Dorsolateral prefrontal cortex (tissue), 120 donors: ENCODE measurements at regions of chr9 and their contacts with region 1.

Region 1: DNA sequence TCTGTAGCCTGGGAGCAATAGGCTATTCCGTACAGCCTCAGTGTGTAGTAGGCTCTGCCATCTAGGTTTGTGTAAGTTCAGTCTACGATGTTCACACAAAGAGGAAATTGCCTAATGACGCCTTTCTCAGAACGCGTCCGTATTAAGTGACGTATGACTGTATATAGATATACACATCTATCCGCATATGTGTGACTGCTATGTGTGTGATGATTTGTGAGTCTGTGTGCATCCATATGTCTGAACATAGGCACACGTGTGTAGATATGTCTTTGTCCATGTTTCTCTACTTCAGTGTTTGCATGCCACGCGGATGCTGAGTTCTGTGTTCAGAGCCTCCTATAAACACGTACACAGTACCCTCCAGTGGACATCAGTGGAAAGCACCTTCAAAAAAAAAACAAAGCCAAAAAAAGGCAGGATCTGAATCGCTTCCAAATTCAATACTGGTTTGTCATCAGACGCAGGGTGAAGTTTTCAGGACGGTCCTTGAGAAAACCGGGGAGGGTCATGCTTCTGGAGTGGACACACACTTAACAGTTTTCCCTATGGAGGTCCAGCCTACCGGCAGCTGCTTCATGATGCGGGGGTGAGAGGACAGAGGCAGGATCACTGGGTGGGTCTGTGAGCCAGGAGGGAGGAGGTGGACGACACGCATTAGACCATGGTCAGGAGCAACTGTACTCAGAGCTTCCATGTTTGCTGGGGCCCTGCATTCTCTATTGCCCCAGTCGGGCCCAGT is 29.5 kb upstream of the ALDH1B1 start:
- DNase-seq: peak in 7 of 10 donors; percentile 23 to 68 (median 47)
- H3K4me3 ChIP-seq: peak overlapping the region in 19 of 59 donors; percentile 2 to 41 (median 20)
- H3K27ac ChIP-seq: no peak overlapping the region
- H3K27me3 ChIP-seq: no peaks in the 10 kb centered on the region
- CTCF ChIP-seq: peak; percentile 29 to 81 (median 64)

Region 2: GRCh38 chr9:37174247-37174646 is 1188.8 kb before region 1 on chr9:
- intact Hi-C with region 1: no loop called
- DNase-seq: no peak
- H3K4me3 ChIP-seq: no peak overlapping the region
- H3K27ac ChIP-seq: no peak overlapping the region
- H3K27me3 ChIP-seq: no peaks in the 10 kb centered on the region
- CTCF ChIP-seq: no peak

Region 3: GRCh38 chr9:37740636-37741328 is 622.2 kb before region 1 on chr9:
- intact Hi-C with region 1: loop called in 1 of 2 experiments (anchors 5 kb)
- DNase-seq: no peak
- H3K4me3 ChIP-seq: no peak overlapping the region
- H3K27ac ChIP-seq: no peak overlapping the region
- H3K27me3 ChIP-seq: no peaks in the 10 kb centered on the region
- CTCF ChIP-seq: no peak

Region 4: GRCh38 chr9:38088006-38088925 is 274.8 kb before region 1 on chr9:
- intact Hi-C with region 1: loop called in 1 of 2 experiments (anchors 5 kb)
- DNase-seq: peak; percentile 57 to 85 (median 76)
- H3K4me3 ChIP-seq: no peak overlapping the region
- H3K27ac ChIP-seq: no peak overlapping the region
- H3K27me3 ChIP-seq: no peaks in the 10 kb centered on the region
- CTCF ChIP-seq: peak; percentile 78 to 99 (median 94)

Region 5: GRCh38 chr9:38294220-38294960 is 68.6 kb before region 1 on chr9:
- intact Hi-C with region 1: loop called in 1 of 2 experiments (anchors 10 kb)
- DNase-seq: no peak
- H3K4me3 ChIP-seq: no peak overlapping the region
- H3K27ac ChIP-seq: no peak overlapping the region
- H3K27me3 ChIP-seq: no peaks in the 10 kb centered on the region
- CTCF ChIP-seq: no peak